ENCODE measurements at regions of chr3 and their contacts with region 1.

Region 1: DNA sequence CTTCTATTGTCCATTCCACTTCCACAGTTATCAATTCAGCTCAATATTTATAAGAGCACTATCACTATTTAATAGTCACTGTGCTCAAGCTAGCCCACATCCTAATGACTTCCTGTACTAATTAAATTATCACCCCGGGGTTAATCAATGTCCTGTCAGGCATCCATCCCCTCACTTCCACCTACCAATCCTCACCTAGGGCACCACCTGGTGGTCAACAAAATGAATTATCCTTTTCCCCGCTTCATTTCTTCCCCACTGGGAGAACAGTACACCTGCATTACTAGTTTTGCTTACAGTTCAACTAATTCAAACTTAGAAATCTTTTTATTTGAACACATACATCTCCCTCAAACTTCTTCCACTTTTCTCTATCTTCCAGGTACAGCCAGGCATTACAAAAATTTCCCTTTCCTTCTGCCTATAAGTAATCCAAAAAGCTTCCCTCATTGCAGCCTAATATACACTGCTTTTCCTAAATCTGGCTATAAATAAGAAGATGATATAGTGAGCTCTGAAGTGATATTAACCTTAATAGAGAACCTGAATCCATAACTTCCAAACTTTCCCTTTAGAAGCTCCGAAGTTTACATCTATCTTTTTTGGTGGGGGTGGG is 68.5 kb downstream of the TMCC1 start:
- DNase-seq: peak in 1 of 2 donors; percentile 80
- ATAC-seq: peak in 2 of 3 donors; percentile 52 to 53
- H3K4me3 ChIP-seq: no peak overlapping the region
- H3K4me3 Mint-ChIP-seq: no peak overlapping the region
- H3K27ac ChIP-seq: no peak overlapping the region
- H3K27ac Mint-ChIP-seq: peak overlapping the region in 1 of 2 donors; percentile 20
- H3K4me1 ChIP-seq: peaks cover 8% of the 10 kb centered on the region
- H3K4me1 Mint-ChIP-seq: peaks cover 19 to 24% of the 10 kb centered on the region in 2 donors
- H3K27me3 ChIP-seq: no peaks in the 10 kb centered on the region
- H3K27me3 Mint-ChIP-seq: no peaks in the 10 kb centered on the region
- CTCF ChIP-seq: peak; percentile 64

Region 2: GRCh38 chr3:129490242-129491045 is 334.6 kb before region 1 on chr3:
- intact Hi-C with region 1: loop called (anchors 1 kb)
- DNase-seq: peak; percentile 46 to 81
- ATAC-seq: peak; percentile 87 to 100 (median 99)
- H3K4me3 ChIP-seq: no peak overlapping the region
- H3K4me3 Mint-ChIP-seq: no peak overlapping the region
- H3K27ac ChIP-seq: no peak overlapping the region
- H3K27ac Mint-ChIP-seq: no peak overlapping the region
- H3K4me1 ChIP-seq: peaks cover 5% of the 10 kb centered on the region
- H3K4me1 Mint-ChIP-seq: peaks cover 0 to 9% of the 10 kb centered on the region in 2 donors
- H3K27me3 ChIP-seq: no peaks in the 10 kb centered on the region
- H3K27me3 Mint-ChIP-seq: no peaks in the 10 kb centered on the region
- CTCF ChIP-seq: peak; percentile 94

Region 3: GRCh38 chr3:129650256-129650872 is 174.7 kb before region 1 on chr3:
- intact Hi-C with region 1: loop called (anchors 10 kb)
- DNase-seq: peak; percentile 36 to 71
- ATAC-seq: peak in 1 of 3 donors; percentile 61
- H3K4me3 ChIP-seq: no peak overlapping the region
- H3K4me3 Mint-ChIP-seq: no peak overlapping the region
- H3K27ac ChIP-seq: no peak overlapping the region
- H3K27ac Mint-ChIP-seq: no peak overlapping the region
- H3K4me1 ChIP-seq: no peaks in the 10 kb centered on the region
- H3K4me1 Mint-ChIP-seq: peaks cover 5 to 6% of the 10 kb centered on the region in 2 donors
- H3K27me3 ChIP-seq: no peaks in the 10 kb centered on the region
- H3K27me3 Mint-ChIP-seq: no peaks in the 10 kb centered on the region
- CTCF ChIP-seq: peak; percentile 72

Region 4: DNA sequence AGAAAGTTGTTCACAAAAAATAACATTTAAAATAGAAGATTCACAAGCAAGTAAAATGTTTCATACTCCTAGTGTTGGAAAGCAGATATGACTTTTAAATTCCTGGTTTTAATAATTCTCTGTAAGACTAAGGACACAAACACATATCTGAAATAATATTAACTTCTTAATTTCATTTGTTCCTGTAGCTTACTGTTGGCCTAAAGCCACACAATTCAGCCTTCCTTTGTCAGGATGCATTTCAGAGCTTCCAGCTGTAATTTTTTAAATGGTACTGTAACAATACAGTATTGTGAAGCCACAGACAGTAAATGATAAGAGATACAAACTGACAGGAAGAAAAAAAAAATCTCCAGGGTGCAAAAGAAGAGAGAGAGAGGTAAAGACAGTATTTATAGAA is 15.7 kb before region 1 on chr3:
- intact Hi-C with region 1: no loop called
- DNase-seq: no peak
- ATAC-seq: no peak
- H3K4me3 ChIP-seq: no peak overlapping the region
- H3K4me3 Mint-ChIP-seq: no peak overlapping the region
- H3K27ac ChIP-seq: no peak overlapping the region
- H3K27ac Mint-ChIP-seq: no peak overlapping the region
- H3K4me1 ChIP-seq: no peaks in the 10 kb centered on the region
- H3K4me1 Mint-ChIP-seq: peaks cover 15 to 29% of the 10 kb centered on the region in 2 donors
- H3K27me3 ChIP-seq: no peaks in the 10 kb centered on the region
- H3K27me3 Mint-ChIP-seq: no peaks in the 10 kb centered on the region
- CTCF ChIP-seq: no peak

Region 5: DNA sequence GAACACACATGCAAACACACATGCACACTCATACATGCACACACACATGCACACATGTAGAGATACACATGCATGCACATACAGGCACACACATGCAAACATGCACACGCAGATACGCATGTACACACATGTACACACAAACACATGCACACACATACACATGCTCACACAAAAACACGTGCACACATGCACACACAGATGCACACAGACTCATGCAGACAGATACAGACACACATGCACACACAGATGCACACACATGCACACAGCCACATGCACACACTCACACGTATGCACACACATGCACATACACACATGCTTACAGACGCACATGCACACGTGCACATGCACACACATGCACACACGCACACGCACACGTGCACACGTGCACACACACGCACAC is 219.3 kb after region 1 on chr3:
- intact Hi-C with region 1: no loop called
- DNase-seq: no peak
- ATAC-seq: no peak
- H3K4me3 ChIP-seq: no peak overlapping the region
- H3K4me3 Mint-ChIP-seq: no peak overlapping the region
- H3K27ac ChIP-seq: no peak overlapping the region
- H3K27ac Mint-ChIP-seq: no peak overlapping the region
- H3K4me1 ChIP-seq: no peaks in the 10 kb centered on the region
- H3K4me1 Mint-ChIP-seq: no peaks in the 10 kb centered on the region
- H3K27me3 ChIP-seq: no peaks in the 10 kb centered on the region
- H3K27me3 Mint-ChIP-seq: peaks cover 1 to 5% of the 10 kb centered on the region in 2 donors
- CTCF ChIP-seq: no peak

Measured in natural killer cell (primary cell).